K562 (cell line): ENCODE measurements at regions of chr20 and their contacts with region 1.

Region 1: DNA sequence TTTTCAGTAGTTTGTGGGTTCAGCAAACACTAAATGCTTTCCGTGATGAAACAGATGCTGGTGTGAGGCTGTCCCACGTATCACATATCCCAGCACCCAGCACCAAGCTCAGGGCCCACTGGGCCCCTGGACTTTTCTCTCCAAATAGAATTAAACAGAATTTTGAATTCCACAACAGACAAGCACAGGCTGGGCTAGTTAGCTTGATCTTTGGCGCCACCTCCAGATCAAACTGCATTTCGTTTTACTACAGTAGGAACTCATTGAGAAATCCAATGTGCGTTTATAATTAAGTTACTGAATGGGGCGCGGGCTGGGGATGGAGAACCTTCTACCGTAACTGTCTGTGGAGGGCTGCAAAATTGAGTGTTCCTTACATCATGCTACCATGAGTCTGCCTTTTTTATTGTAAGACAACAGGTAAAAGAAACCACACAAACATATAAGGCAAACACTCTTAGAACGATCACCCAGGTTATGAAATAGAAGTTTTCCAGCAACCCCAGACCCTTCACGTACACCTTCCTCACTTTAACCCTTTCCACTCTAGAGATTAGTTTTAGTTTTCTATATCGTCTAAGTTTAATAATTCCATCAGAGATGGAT is 107.8 kb downstream of the ZFP64 start:
- DNase-seq: peak; percentile 22 to 59 (median 39)
- ATAC-seq: peak; percentile 80
- H3K4me3 ChIP-seq: no peak overlapping the region
- H3K27ac ChIP-seq: no peak overlapping the region
- H3K4me1 ChIP-seq: no peaks in the 10 kb centered on the region; a peak in 1 of 5 replicates
- H3K27me3 ChIP-seq: no peaks in the 10 kb centered on the region; a peak in 1 of 5 replicates
- CTCF ChIP-seq: peak; percentile 59 to 77 (median 66); a peak in 5 of 6 replicates
- EP300 ChIP-seq: no peak
- POLR2A ChIP-seq: no peak
- RAD21 ChIP-seq: peak; percentile 66 to 83

Region 2: GRCh38 chr20:50987592-50988210 is 1096.0 kb before region 1 on chr20:
- CTCF ChIA-PET with region 1: no interaction called
- POLR2A ChIA-PET with region 1: no interaction called
- in situ Hi-C with region 1: loop called (anchors 25 kb)
- intact Hi-C with region 1: no loop called
- DNase-seq: peak; percentile 71 to 85 (median 76)
- ATAC-seq: peak; percentile 97
- H3K4me3 ChIP-seq: no peak overlapping the region
- H3K27ac ChIP-seq: no peak overlapping the region
- H3K4me1 ChIP-seq: 0 out of 5 replicates have a peak, but pooled peaks cover 0 to 2% of the 10 kb centered on the region in 2 experiments
- H3K27me3 ChIP-seq: peaks cover 15 to 28% of the 10 kb centered on the region in 2 experiments; a peak in 4 of 5 replicates
- CTCF ChIP-seq: peak; percentile 80 to 95 (median 90)
- EP300 ChIP-seq: no peak
- POLR2A ChIP-seq: no peak
- RAD21 ChIP-seq: peak; percentile 86 to 93

Region 3: GRCh38 chr20:51372176-51372803 is 711.4 kb before region 1 on chr20:
- CTCF ChIA-PET with region 1: no interaction called
- POLR2A ChIA-PET with region 1: no interaction called
- in situ Hi-C with region 1: loop called (anchors 10 kb)
- intact Hi-C with region 1: loop called (anchors 5 kb)
- DNase-seq: peak; percentile 71 to 85 (median 76)
- ATAC-seq: peak; percentile 94
- H3K4me3 ChIP-seq: no peak overlapping the region
- H3K27ac ChIP-seq: no peak overlapping the region
- H3K4me1 ChIP-seq: peaks cover 17 to 26% of the 10 kb centered on the region in 2 experiments
- H3K27me3 ChIP-seq: peaks cover 8 to 22% of the 10 kb centered on the region in 2 experiments; a peak in 4 of 5 replicates
- CTCF ChIP-seq: peak; percentile 88 to 90 (median 89)
- EP300 ChIP-seq: no peak
- POLR2A ChIP-seq: no peak
- RAD21 ChIP-seq: peak; percentile 87 to 92

Region 4: GRCh38 chr20:51639206-51639832 is 444.4 kb before region 1 on chr20:
- CTCF ChIA-PET with region 1: no interaction called
- POLR2A ChIA-PET with region 1: interaction called, 3 read pairs
- in situ Hi-C with region 1: loop called (anchors 5 kb)
- intact Hi-C with region 1: loop called (anchors 1 kb)
- DNase-seq: peak; percentile 68 to 77 (median 74)
- ATAC-seq: peak; percentile 90
- H3K4me3 ChIP-seq: no peak overlapping the region
- H3K27ac ChIP-seq: no peak overlapping the region
- H3K4me1 ChIP-seq: peaks cover 0 to 4% of the 10 kb centered on the region in 2 experiments; a peak in 2 of 5 replicates
- H3K27me3 ChIP-seq: peaks cover 3 to 17% of the 10 kb centered on the region in 2 experiments; a peak in 3 of 5 replicates
- CTCF ChIP-seq: peak; percentile 78 to 94 (median 86)
- EP300 ChIP-seq: no peak
- POLR2A ChIP-seq: no peak
- RAD21 ChIP-seq: peak; percentile 72 to 83

Region 5: GRCh38 chr20:51703400-51704287 is 380.1 kb before region 1 on chr20:
- CTCF ChIA-PET with region 1: interaction called, 3 read pairs
- POLR2A ChIA-PET with region 1: interaction called, 3 read pairs
- in situ Hi-C with region 1: no loop called
- intact Hi-C with region 1: loop called (anchors 5 kb)
- DNase-seq: no peak
- ATAC-seq: no peak
- H3K4me3 ChIP-seq: no peak overlapping the region
- H3K27ac ChIP-seq: no peak overlapping the region
- H3K4me1 ChIP-seq: no peaks in the 10 kb centered on the region
- H3K27me3 ChIP-seq: peaks cover 5 to 26% of the 10 kb centered on the region in 2 experiments; a peak in 4 of 5 replicates
- CTCF ChIP-seq: no peak
- EP300 ChIP-seq: no peak
- POLR2A ChIP-seq: no peak
- RAD21 ChIP-seq: no peak